CD4-positive, alpha-beta memory T cell (primary cell): ENCODE measurements at regions of chr2 and their contacts with region 1.

Region 1: GRCh38 chr2:136117909-136118818 is at the start of gene CXCR4:
- DNase-seq: peak; percentile 85 to 96 (median 90)
- H3K4me3 ChIP-seq: peak within 1 kb of the TSS; percentile 65 to 95
- H3K4me3 Mint-ChIP-seq: peak within 1 kb of the TSS; percentile 98 to 100 (median 99)
- H3K27ac ChIP-seq: peak within 1 kb of the TSS; percentile 94
- H3K27ac Mint-ChIP-seq: peak within 1 kb of the TSS; percentile 99 to 100 (median 99)
- H3K4me1 ChIP-seq: peaks cover 44% of the 10 kb centered on the region
- H3K4me1 Mint-ChIP-seq: peaks cover 38 to 95% (median 55%) of the 10 kb centered on the region in 4 donors
- H3K27me3 ChIP-seq: no peaks in the 10 kb centered on the region
- H3K27me3 Mint-ChIP-seq: no peaks in the 10 kb centered on the region
- total RNA-seq, gene CXCR4: 306 to 308 TPM

Region 2: DNA sequence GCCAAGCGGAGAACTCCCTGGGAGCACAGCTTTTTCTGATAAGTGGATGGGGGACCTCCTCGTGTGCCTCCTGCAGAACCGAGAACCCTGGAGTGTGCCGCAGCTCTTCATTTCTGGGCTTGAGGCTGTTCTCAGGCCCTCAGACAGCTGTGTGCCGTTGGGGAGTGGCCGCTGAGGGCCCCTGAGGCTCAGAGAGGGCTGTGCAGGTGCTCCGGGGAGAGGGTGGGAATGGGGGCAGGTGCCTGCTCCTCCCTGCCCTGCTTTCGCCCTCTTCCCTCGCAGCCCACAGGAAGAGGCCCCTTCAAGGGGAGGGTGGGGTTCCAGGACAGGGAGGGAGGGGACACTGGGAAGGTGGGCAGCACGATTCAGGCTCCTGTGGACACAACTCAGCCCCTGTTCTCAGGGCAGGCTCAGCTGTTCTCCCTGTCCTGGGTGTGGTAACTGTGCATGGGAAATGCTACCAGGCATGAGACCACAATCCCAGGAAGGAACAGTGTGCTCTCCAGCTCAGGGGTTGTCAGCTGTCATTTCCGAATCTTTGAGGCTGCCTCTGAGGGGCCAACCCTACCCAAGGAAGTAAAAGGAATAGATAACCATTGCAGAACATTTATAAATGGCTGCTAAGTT is 292.5 kb before region 1 on chr2:
- CTCF ChIA-PET with region 1: no interaction called
- POLR2A ChIA-PET with region 1: no interaction called
- intact Hi-C with region 1: no loop called
- DNase-seq: no peak
- H3K4me3 ChIP-seq: no peak overlapping the region
- H3K4me3 Mint-ChIP-seq: no peak overlapping the region
- H3K27ac ChIP-seq: no peak overlapping the region
- H3K27ac Mint-ChIP-seq: no peak overlapping the region
- H3K4me1 ChIP-seq: peaks cover under 1% of the 10 kb centered on the region
- H3K4me1 Mint-ChIP-seq: peaks cover 0 to 4% (median 2%) of the 10 kb centered on the region in 4 donors
- H3K27me3 ChIP-seq: no peaks in the 10 kb centered on the region
- H3K27me3 Mint-ChIP-seq: no peaks in the 10 kb centered on the region

Region 3: GRCh38 chr2:135913727-135914365 is 204.3 kb before region 1 on chr2:
- CTCF ChIA-PET with region 1: interaction called, 4 read pairs
- POLR2A ChIA-PET with region 1: interaction called, 6 read pairs
- intact Hi-C with region 1: loop called (anchors 1 kb)
- DNase-seq: peak; percentile 48 to 61 (median 58)
- H3K4me3 ChIP-seq: no peak overlapping the region
- H3K4me3 Mint-ChIP-seq: no peak overlapping the region
- H3K27ac ChIP-seq: no peak overlapping the region
- H3K27ac Mint-ChIP-seq: peak overlapping the region; percentile 34 to 90 (median 81)
- H3K4me1 ChIP-seq: no peaks in the 10 kb centered on the region
- H3K4me1 Mint-ChIP-seq: peaks cover 0 to 8% (median 3%) of the 10 kb centered on the region in 4 donors
- H3K27me3 ChIP-seq: no peaks in the 10 kb centered on the region
- H3K27me3 Mint-ChIP-seq: no peaks in the 10 kb centered on the region

Region 4: GRCh38 chr2:135985018-135985825 is 132.9 kb before region 1 on chr2 and contains the start of gene DARS1:
- CTCF ChIA-PET with region 1: no interaction called
- POLR2A ChIA-PET with region 1: interaction called, 12 read pairs
- intact Hi-C with region 1: loop called (anchors 1 kb)
- DNase-seq: peak; percentile 56 to 81 (median 78)
- H3K4me3 ChIP-seq: peak within 1 kb of the TSS; percentile 43 to 82
- H3K4me3 Mint-ChIP-seq: peak within 1 kb of the TSS; percentile 95 to 99 (median 98)
- H3K27ac ChIP-seq: peak within 1 kb of the TSS; percentile 99
- H3K27ac Mint-ChIP-seq: peak within 1 kb of the TSS; percentile 96 to 100 (median 99)
- H3K4me1 ChIP-seq: peaks cover 35% of the 10 kb centered on the region
- H3K4me1 Mint-ChIP-seq: peaks cover 26 to 61% (median 35%) of the 10 kb centered on the region in 4 donors
- H3K27me3 ChIP-seq: no peaks in the 10 kb centered on the region
- H3K27me3 Mint-ChIP-seq: no peaks in the 10 kb centered on the region
- total RNA-seq, gene DARS1: 84.9 to 90.1 TPM

Region 5: GRCh38 chr2:136129601-136130000 is 11.4 kb after region 1 on chr2:
- CTCF ChIA-PET with region 1: interaction called, 24 read pairs
- POLR2A ChIA-PET with region 1: interaction called, 599 read pairs
- intact Hi-C with region 1: loop called (anchors 1 kb)
- DNase-seq: peak; percentile 83 to 87 (median 85)
- H3K4me3 ChIP-seq: no peak overlapping the region
- H3K4me3 Mint-ChIP-seq: peak overlapping the region; percentile 63 to 87 (median 76)
- H3K27ac ChIP-seq: peak overlapping the region; percentile 95
- H3K27ac Mint-ChIP-seq: peak overlapping the region; percentile 96 to 100 (median 99)
- H3K4me1 ChIP-seq: peaks cover 100% of the 10 kb centered on the region
- H3K4me1 Mint-ChIP-seq: peaks cover 71 to 99% (median 87%) of the 10 kb centered on the region in 4 donors
- H3K27me3 ChIP-seq: no peaks in the 10 kb centered on the region
- H3K27me3 Mint-ChIP-seq: no peaks in the 10 kb centered on the region

Region 6: GRCh38 chr2:136212423-136213378 is 94.5 kb after region 1 on chr2:
- CTCF ChIA-PET with region 1: no interaction called
- POLR2A ChIA-PET with region 1: interaction called, 19 read pairs
- intact Hi-C with region 1: no loop called
- DNase-seq: peak; percentile 53 to 70 (median 59)
- H3K4me3 ChIP-seq: no peak overlapping the region
- H3K4me3 Mint-ChIP-seq: peak overlapping the region in 7 of 8 donors; percentile 3 to 76 (median 45)
- H3K27ac ChIP-seq: peak overlapping the region; percentile 39
- H3K27ac Mint-ChIP-seq: peak overlapping the region; percentile 73 to 96 (median 90)
- H3K4me1 ChIP-seq: peaks cover 31% of the 10 kb centered on the region
- H3K4me1 Mint-ChIP-seq: peaks cover 25 to 66% (median 35%) of the 10 kb centered on the region in 4 donors
- H3K27me3 ChIP-seq: no peaks in the 10 kb centered on the region
- H3K27me3 Mint-ChIP-seq: no peaks in the 10 kb centered on the region

Region 7: GRCh38 chr2:136327162-136327852 is 209.1 kb after region 1 on chr2:
- CTCF ChIA-PET with region 1: interaction called, 3 read pairs
- POLR2A ChIA-PET with region 1: interaction called, 62 read pairs
- intact Hi-C with region 1: loop called (anchors 1 kb)
- DNase-seq: peak; percentile 88 to 96 (median 91)
- H3K4me3 ChIP-seq: peak overlapping the region; percentile 7 to 39
- H3K4me3 Mint-ChIP-seq: peak overlapping the region; percentile 67 to 90 (median 80)
- H3K27ac ChIP-seq: peak overlapping the region; percentile 69
- H3K27ac Mint-ChIP-seq: peak overlapping the region; percentile 91 to 99 (median 98)
- H3K4me1 ChIP-seq: peaks cover 62% of the 10 kb centered on the region
- H3K4me1 Mint-ChIP-seq: peaks cover 42 to 62% (median 51%) of the 10 kb centered on the region in 4 donors
- H3K27me3 ChIP-seq: no peaks in the 10 kb centered on the region
- H3K27me3 Mint-ChIP-seq: no peaks in the 10 kb centered on the region

Region 8: GRCh38 chr2:136384531-136385303 is 266.6 kb after region 1 on chr2:
- CTCF ChIA-PET with region 1: interaction called, 5 read pairs
- POLR2A ChIA-PET with region 1: interaction called, 13 read pairs
- intact Hi-C with region 1: loop called (anchors 1 kb)
- DNase-seq: peak; percentile 69 to 70 (median 70)
- H3K4me3 ChIP-seq: no peak overlapping the region
- H3K4me3 Mint-ChIP-seq: peak overlapping the region in 3 of 8 donors; percentile 3 to 54 (median 47)
- H3K27ac ChIP-seq: no peak overlapping the region
- H3K27ac Mint-ChIP-seq: peak overlapping the region; percentile 72 to 97 (median 89)
- H3K4me1 ChIP-seq: peaks cover 33% of the 10 kb centered on the region
- H3K4me1 Mint-ChIP-seq: peaks cover 34 to 38% (median 37%) of the 10 kb centered on the region in 4 donors
- H3K27me3 ChIP-seq: no peaks in the 10 kb centered on the region
- H3K27me3 Mint-ChIP-seq: no peaks in the 10 kb centered on the region